ENCODE measurements at regions of chr20 and their contacts with region 1.

Region 1: GRCh38 chr20:48620519-48621254 is 207.1 kb downstream of the PREX1 start:
- DNase-seq: peak; percentile 56
- H3K4me3 Mint-ChIP-seq: peak overlapping the region; percentile 30
- H3K27ac Mint-ChIP-seq: peak overlapping the region; percentile 13
- H3K4me1 Mint-ChIP-seq: peaks cover 5% of the 10 kb centered on the region
- H3K27me3 Mint-ChIP-seq: no peaks in the 10 kb centered on the region

Region 2: DNA sequence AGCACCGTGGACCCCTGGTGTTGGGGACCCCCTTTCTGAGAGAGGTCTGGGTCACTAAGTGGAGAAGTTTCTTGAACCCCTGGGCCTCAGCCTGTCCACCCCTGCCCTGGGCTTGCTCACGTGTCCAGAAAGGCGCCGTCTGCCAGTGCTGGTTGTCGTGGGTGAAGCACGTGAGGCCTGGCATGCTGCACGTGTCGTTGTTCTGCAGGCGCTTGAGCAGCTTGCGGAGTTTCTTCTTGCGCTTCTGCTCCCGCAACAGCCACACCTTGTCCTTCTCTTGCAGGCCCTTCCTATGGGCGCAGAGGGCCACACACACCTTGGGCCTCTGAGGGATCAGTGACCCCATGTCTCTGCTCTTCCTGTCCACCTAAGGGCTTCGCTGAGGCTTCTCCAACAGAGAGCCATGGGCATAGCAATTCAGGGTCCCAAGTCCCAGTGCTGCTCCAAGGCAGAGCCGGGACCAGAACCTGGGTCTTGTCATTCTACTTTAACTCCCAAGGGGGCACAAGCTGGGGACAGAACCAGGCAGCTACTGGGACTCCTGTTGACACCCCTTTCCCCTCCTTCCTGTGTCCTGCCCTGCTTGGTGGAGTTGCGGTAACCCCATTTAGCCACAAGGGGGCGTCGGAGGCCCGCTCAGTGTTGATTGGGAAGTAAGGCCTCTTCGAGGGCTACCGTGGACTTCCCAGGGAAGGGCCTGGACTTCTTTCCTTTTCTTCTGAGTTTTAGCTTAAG is 957.2 kb before region 1 on chr20:
- intact Hi-C with region 1: loop called (anchors 1 kb)
- DNase-seq: peak; percentile 65
- H3K4me3 Mint-ChIP-seq: no peak overlapping the region
- H3K27ac Mint-ChIP-seq: peak overlapping the region; percentile 15
- H3K4me1 Mint-ChIP-seq: peaks cover 11% of the 10 kb centered on the region
- H3K27me3 Mint-ChIP-seq: no peaks in the 10 kb centered on the region

Region 3: DNA sequence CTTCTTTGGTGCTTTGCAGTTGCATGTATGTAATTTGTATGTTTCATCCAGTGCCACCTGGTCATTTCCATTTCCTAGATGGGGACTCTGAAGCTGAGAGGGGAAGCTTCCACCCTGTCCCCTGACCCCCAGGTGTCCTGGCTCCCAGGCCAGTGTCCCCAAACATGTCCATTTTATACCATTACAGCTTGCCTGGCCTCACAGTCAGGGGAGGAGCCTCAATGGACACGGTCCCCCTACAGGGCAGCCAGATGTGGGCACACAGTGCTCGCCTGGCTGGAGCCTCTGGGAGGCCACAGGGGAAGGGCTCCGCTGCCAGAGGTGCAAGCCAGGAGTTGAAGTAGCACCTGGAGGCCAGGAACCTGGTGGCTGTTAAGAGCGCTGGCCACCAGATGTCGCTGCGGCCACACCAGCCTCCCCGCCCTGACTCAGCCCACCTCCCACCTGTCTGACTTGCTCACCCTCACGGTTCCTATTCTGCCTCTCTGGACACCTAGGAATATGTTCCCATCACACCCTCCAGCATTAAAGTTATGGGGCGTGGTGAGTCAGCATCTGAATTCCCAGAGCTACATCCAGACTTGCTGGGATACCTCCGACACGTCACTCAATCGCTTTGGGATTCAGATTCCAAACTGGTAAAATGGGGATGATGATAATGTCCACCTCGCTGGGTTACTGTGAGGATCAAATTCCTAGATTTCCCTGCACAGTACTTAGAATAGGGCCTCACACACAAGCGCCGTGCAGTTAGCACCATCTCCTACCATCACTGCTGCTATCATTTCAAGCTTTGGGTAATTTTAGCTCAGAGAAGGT is 942.8 kb before region 1 on chr20:
- intact Hi-C with region 1: loop called (anchors 1 kb)
- DNase-seq: peak; percentile 21
- H3K4me3 Mint-ChIP-seq: no peak overlapping the region
- H3K27ac Mint-ChIP-seq: no peak overlapping the region
- H3K4me1 Mint-ChIP-seq: no peaks in the 10 kb centered on the region
- H3K27me3 Mint-ChIP-seq: no peaks in the 10 kb centered on the region

Region 4: GRCh38 chr20:47725248-47725973 is 895.3 kb before region 1 on chr20:
- intact Hi-C with region 1: loop called (anchors 1 kb)
- DNase-seq: peak; percentile 81
- H3K4me3 Mint-ChIP-seq: no peak overlapping the region
- H3K27ac Mint-ChIP-seq: peak overlapping the region; percentile 14
- H3K4me1 Mint-ChIP-seq: peaks cover 46% of the 10 kb centered on the region
- H3K27me3 Mint-ChIP-seq: no peaks in the 10 kb centered on the region